Motor neuron (in vitro differentiated cells): ENCODE measurements at regions of chr3 and their contacts with region 1.

Region 1: DNA sequence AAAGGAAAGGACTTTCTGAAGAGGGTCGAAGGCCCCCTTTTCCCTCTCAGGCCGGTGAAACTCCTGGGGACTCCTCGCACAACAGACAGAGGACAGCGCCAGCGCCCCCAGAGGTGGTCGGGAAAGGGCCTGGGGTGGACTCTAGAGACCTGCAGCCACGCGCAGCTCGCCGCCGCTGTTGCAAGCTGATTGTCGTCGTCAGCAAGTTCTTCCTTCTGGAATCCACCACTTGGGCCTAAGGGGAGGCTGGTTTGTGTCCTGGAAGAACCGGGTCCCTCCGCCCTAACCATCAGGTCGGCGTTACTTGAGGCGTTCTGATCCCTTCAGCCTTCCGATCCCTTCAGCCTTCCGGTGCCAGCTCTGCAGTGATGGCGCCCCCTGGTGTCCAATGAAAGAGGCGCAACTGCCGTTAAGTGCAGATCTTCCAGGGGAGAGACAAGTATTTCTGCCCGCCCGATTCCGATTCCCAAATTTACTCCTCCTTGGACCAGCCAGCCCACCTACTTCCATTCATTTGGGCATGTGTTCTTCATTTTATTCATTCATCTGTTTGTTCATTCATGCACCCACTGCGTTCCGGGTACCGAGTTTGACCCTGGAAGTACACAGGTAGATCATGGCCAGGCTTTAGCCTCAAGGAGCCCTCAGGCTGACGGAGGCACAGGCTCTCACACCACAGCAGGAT is 77.2 kb upstream of the SLC6A11 start:
- ATAC-seq: peak; percentile 91 to 99 (median 97)
- H3K4me3 ChIP-seq: peak overlapping the region; percentile 21 to 42 (median 32)
- H3K27ac ChIP-seq: no peak overlapping the region
- H3K4me1 ChIP-seq: no peaks in the 10 kb centered on the region

Region 2: GRCh38 chr3:10344147-10344943 is 394.5 kb before region 1 on chr3:
- in situ Hi-C with region 1: loop called in 4 of 9 experiments (anchors 25 kb)
- ATAC-seq: peak; percentile 46 to 78 (median 68)
- H3K4me3 ChIP-seq: no peak overlapping the region
- H3K27ac ChIP-seq: no peak overlapping the region
- H3K4me1 ChIP-seq: no peaks in the 10 kb centered on the region

Region 3: DNA sequence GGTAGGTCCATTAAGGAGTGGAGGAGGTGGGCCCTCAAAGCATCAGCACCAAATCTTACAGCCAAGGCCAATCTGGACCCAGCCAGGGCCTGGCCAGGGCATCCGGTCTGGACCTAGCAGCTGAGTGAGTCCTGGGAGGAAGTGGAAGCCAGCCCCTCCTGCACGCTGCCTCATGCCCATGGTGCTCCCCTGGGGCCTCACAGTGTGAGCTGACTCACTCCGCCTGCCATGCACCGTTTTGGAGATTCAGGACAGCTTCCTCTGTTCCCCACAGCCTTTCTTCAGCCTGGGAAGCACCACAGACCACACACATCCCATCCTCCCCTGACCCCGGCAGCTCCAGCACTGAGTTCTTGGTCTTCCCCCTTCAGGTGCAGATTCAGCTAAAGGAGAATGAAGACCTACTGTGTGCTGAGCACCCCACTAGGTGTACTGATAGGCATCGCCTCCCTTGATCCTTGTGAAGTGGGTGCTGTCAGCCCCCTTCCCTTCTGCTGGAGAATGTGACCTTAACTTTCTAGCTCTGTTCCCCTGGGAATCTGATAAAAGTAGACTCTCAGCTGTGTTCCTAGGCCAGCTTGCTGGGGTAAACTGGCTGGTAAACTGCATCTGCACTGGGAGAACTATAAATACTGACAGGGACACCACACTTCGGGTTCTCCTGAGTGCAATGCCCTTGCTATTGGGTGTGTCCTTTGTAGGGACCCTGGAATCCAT is 381.1 kb before region 1 on chr3:
- in situ Hi-C with region 1: loop called in 2 of 9 experiments (anchors 25 kb)
- ATAC-seq: peak in 7 of 8 experiments; percentile 88 to 96 (median 93)
- H3K4me3 ChIP-seq: no peak overlapping the region
- H3K27ac ChIP-seq: no peak overlapping the region
- H3K4me1 ChIP-seq: no peaks in the 10 kb centered on the region

Region 4: DNA sequence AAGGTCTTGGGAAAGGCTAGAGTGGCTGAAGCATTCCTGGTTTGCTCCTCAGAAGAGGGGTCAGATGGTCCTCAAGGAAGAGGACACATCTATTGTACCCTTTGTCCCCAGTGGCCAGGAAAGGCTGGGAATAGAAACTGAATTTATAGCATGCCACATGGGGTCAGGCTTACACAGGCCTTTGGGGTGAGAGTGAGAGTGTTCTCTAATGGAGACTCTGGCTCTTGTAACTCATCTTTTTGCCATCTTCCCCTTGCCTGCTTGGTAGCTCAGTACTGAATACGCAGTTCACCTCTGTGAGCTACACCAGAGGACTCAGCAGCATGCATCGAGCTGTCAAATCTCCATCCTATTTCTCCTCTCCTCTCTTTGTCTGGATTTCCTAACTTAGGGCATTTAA is 321.0 kb before region 1 on chr3:
- in situ Hi-C with region 1: loop called in 1 of 9 experiments (anchors 25 kb)
- ATAC-seq: peak in 3 of 8 experiments; percentile 46 to 86 (median 72)
- H3K4me3 ChIP-seq: no peak overlapping the region
- H3K27ac ChIP-seq: no peak overlapping the region
- H3K4me1 ChIP-seq: no peaks in the 10 kb centered on the region